GM12878 (cell line): ENCODE measurements at regions of chr9 and their contacts with region 1.

Region 1: GRCh38 chr9:77163884-77164283 is 13.4 kb upstream of the VPS13A start:
- DNase-seq: no peak
- ATAC-seq: no peak
- H3K4me3 ChIP-seq: no peak overlapping the region
- H3K27ac ChIP-seq: no peak overlapping the region
- H3K4me1 ChIP-seq: no peaks in the 10 kb centered on the region
- H3K27me3 ChIP-seq: no peaks in the 10 kb centered on the region; a peak in 2 of 4 replicates
- CTCF ChIP-seq: no peak
- EP300 ChIP-seq: no peak
- POLR2A ChIP-seq: no peak
- RAD21 ChIP-seq: no peak

Region 2: GRCh38 chr9:76810377-76810957 is 353.4 kb before region 1 on chr9:
- CTCF ChIA-PET with region 1: no interaction called
- POLR2A ChIA-PET with region 1: no interaction called
- RAD21 ChIA-PET with region 1: no interaction called
- SMC1A ChIA-PET with region 1: no interaction called
- in situ Hi-C with region 1: loop called (anchors 25 kb)
- intact Hi-C with region 1: no loop called
- DNase-seq: no peak
- ATAC-seq: peak; percentile 85
- H3K4me3 ChIP-seq: no peak overlapping the region
- H3K27ac ChIP-seq: no peak overlapping the region
- H3K4me1 ChIP-seq: no peaks in the 10 kb centered on the region
- H3K27me3 ChIP-seq: no peaks in the 10 kb centered on the region; a peak in 1 of 4 replicates
- CTCF ChIP-seq: peak; percentile 78 to 92 (median 88)
- EP300 ChIP-seq: no peak
- POLR2A ChIP-seq: no peak
- RAD21 ChIP-seq: peak; percentile 95

Region 3: GRCh38 chr9:77072022-77072421 is 91.9 kb before region 1 on chr9:
- CTCF ChIA-PET with region 1: no interaction called
- POLR2A ChIA-PET with region 1: no interaction called
- RAD21 ChIA-PET with region 1: no interaction called
- SMC1A ChIA-PET with region 1: no interaction called
- in situ Hi-C with region 1: no loop called
- intact Hi-C with region 1: no loop called
- DNase-seq: no peak
- ATAC-seq: no peak
- H3K4me3 ChIP-seq: no peak overlapping the region
- H3K27ac ChIP-seq: no peak overlapping the region
- H3K4me1 ChIP-seq: no peaks in the 10 kb centered on the region
- H3K27me3 ChIP-seq: no peaks in the 10 kb centered on the region
- CTCF ChIP-seq: no peak
- EP300 ChIP-seq: no peak
- POLR2A ChIP-seq: no peak
- RAD21 ChIP-seq: no peak

Region 4: DNA sequence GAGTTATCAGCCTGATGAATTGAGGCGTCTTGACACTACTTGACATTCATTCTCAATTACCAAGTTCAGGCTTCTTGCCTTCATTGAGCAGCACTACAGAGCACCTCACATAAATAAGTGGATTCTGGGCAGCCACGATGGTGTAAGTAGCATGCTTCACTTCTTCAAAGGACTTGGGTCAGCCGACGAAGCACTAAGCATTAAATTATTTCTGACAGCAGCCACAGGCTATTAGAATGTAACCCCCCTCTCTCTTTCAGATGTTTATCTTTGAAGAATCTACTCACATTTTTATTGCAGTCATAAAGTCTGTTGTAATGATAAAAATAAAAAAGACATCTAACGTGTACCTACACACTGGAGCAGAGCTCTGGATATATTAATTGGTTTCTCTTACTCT is 32.5 kb before region 1 on chr9:
- CTCF ChIA-PET with region 1: no interaction called
- POLR2A ChIA-PET with region 1: no interaction called
- RAD21 ChIA-PET with region 1: no interaction called
- SMC1A ChIA-PET with region 1: no interaction called
- in situ Hi-C with region 1: no loop called
- intact Hi-C with region 1: no loop called
- DNase-seq: no peak
- ATAC-seq: no peak
- H3K4me3 ChIP-seq: no peak overlapping the region
- H3K27ac ChIP-seq: no peak overlapping the region
- H3K4me1 ChIP-seq: no peaks in the 10 kb centered on the region
- H3K27me3 ChIP-seq: no peaks in the 10 kb centered on the region
- CTCF ChIP-seq: no peak
- EP300 ChIP-seq: no peak
- POLR2A ChIP-seq: no peak
- RAD21 ChIP-seq: no peak

Region 5: DNA sequence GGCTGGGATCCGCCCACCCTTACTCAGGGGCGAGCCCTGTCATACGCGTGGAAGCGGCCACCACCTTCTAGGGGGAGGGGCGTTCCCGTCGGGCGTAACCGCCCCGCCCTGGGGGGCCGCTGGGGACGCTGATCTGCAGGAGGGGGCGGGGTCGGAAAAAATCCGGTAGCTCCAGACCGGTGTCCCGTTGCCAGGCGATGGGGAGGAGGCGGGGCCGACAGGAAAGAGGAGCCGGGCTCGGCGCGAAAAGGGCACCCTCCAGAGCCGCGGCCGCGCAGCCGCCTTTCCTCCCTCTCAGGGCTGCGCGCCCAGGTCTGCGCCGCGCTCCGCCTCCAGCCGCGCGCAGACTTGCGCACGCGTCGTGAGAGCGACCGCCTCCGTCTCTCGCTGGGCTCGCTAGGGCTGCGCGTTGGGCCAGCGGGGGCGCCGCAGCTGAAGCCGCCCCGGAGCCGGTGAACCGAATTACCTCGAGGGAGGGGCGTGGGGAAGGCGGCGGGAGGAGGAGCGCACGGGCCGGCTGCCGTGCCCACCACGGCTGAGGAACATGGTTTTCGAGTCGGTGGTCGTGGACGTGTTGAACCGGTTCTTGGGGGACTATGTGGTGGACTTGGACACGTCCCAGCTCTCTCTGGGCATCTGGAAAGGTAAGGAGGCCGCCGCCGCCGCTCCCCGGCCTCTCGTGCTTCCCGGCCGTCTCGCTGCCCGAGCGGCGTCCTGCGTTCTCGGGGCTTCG is 13.4 kb after region 1 on chr9 and contains the start of gene VPS13A:
- CTCF ChIA-PET with region 1: interaction called, 21 read pairs
- POLR2A ChIA-PET with region 1: interaction called, 3 read pairs
- RAD21 ChIA-PET with region 1: interaction called, 9 read pairs
- SMC1A ChIA-PET with region 1: interaction called, 7 read pairs
- in situ Hi-C with region 1: no loop called
- intact Hi-C with region 1: no loop called
- DNase-seq: peak; percentile 69
- ATAC-seq: peak; percentile 95
- H3K4me3 ChIP-seq: peak within 1 kb of the TSS; percentile 98
- H3K27ac ChIP-seq: peak within 1 kb of the TSS; percentile 66
- H3K4me1 ChIP-seq: peaks cover 3% of the 10 kb centered on the region; the same call in 1 of the 2 replicates
- H3K27me3 ChIP-seq: no peaks in the 10 kb centered on the region
- CTCF ChIP-seq: peak; percentile 25 to 31 (median 30); a peak in 4 of 6 replicates
- EP300 ChIP-seq: no peak
- POLR2A ChIP-seq: peak; percentile 78
- RAD21 ChIP-seq: no peak
- polyA plus RNA-seq, gene VPS13A: 10.0 to 13.5 TPM

Region 6: DNA sequence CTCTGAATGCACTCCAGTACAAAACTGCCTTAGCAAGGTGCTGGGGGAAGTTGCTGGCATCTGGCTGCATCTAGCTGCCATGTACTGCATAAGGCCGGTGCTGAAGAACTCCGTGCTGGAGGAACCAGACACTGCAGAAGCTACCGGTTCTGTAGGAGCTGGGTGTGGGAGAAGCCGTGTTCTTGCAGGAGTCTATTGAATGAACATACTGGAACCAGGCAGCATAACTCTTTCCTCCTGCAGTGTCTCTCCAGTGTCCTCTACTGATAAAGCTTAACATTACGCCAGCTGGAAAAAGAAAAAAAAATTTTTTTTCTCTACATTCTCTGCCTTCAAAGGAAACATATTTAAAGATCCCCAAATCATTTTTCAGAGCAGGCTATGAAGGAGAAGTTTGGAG is 52.0 kb after region 1 on chr9:
- CTCF ChIA-PET with region 1: interaction called, 24 read pairs
- POLR2A ChIA-PET with region 1: no interaction called
- RAD21 ChIA-PET with region 1: interaction called, 6 read pairs
- SMC1A ChIA-PET with region 1: interaction called, 3 read pairs
- in situ Hi-C with region 1: no loop called
- intact Hi-C with region 1: no loop called
- DNase-seq: no peak
- ATAC-seq: no peak
- H3K4me3 ChIP-seq: no peak overlapping the region
- H3K27ac ChIP-seq: no peak overlapping the region
- H3K4me1 ChIP-seq: no peaks in the 10 kb centered on the region
- H3K27me3 ChIP-seq: no peaks in the 10 kb centered on the region
- CTCF ChIP-seq: peak; percentile 19 to 26 (median 24); a peak in 2 of 6 replicates
- EP300 ChIP-seq: no peak
- POLR2A ChIP-seq: no peak
- RAD21 ChIP-seq: no peak

Region 7: GRCh38 chr9:77237896-77238295 is 74.0 kb after region 1 on chr9:
- CTCF ChIA-PET with region 1: no interaction called
- POLR2A ChIA-PET with region 1: no interaction called
- RAD21 ChIA-PET with region 1: no interaction called
- SMC1A ChIA-PET with region 1: no interaction called
- in situ Hi-C with region 1: no loop called
- intact Hi-C with region 1: no loop called
- DNase-seq: no peak
- ATAC-seq: no peak
- H3K4me3 ChIP-seq: no peak overlapping the region
- H3K27ac ChIP-seq: no peak overlapping the region
- H3K4me1 ChIP-seq: no peaks in the 10 kb centered on the region
- H3K27me3 ChIP-seq: no peaks in the 10 kb centered on the region
- CTCF ChIP-seq: no peak
- EP300 ChIP-seq: no peak
- POLR2A ChIP-seq: no peak
- RAD21 ChIP-seq: no peak

Region 8: GRCh38 chr9:77488439-77489126 is 324.7 kb after region 1 on chr9:
- CTCF ChIA-PET with region 1: interaction called, 4 read pairs
- POLR2A ChIA-PET with region 1: no interaction called
- RAD21 ChIA-PET with region 1: interaction called, 6 read pairs
- SMC1A ChIA-PET with region 1: no interaction called
- in situ Hi-C with region 1: no loop called
- intact Hi-C with region 1: loop called (anchors 2 kb)
- DNase-seq: no peak
- ATAC-seq: peak; percentile 72
- H3K4me3 ChIP-seq: no peak overlapping the region
- H3K27ac ChIP-seq: no peak overlapping the region
- H3K4me1 ChIP-seq: no peaks in the 10 kb centered on the region
- H3K27me3 ChIP-seq: no peaks in the 10 kb centered on the region
- CTCF ChIP-seq: peak; percentile 13 to 44 (median 31); a peak in 4 of 6 replicates
- EP300 ChIP-seq: no peak
- POLR2A ChIP-seq: no peak
- RAD21 ChIP-seq: peak; percentile 70